ENCODE measurements at regions of chr22 and their contacts with region 1.

Region 1: GRCh38 chr22:25702040-25702439 is 39.9 kb upstream of the MYO18B start:
- DNase-seq: no peak
- H3K4me3 ChIP-seq: no peak overlapping the region
- CTCF ChIP-seq: peak; percentile 10

Region 2: GRCh38 chr22:25202290-25202921 is 499.6 kb before region 1 on chr22:
- CTCF ChIA-PET with region 1: interaction called, 12 read pairs
- POLR2A ChIA-PET with region 1: no interaction called
- DNase-seq: peak; percentile 2
- H3K4me3 ChIP-seq: no peak overlapping the region
- CTCF ChIP-seq: peak; percentile 85

Region 3: DNA sequence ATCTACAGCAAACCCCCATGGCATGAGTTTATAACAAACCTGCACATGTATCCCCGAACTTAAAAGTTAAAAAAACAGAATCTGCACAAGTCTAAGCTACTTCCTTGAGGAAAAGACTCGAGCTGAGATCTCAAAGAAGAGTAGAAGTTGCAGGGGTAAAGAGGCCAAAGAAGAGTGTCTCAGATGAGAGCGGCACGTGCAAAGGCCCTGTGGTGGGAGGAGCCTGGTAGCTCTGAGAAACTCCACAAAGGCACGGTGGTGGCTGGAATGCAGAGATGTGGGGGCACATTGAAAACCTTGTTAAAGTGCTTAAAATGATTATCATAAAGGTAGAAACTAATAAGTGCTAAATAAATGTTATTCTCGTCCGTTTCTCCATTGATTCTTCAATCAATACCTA is 240.7 kb before region 1 on chr22:
- CTCF ChIA-PET with region 1: interaction called, 32 read pairs
- POLR2A ChIA-PET with region 1: no interaction called
- DNase-seq: no peak
- H3K4me3 ChIP-seq: no peak overlapping the region
- CTCF ChIP-seq: no peak

Region 4: DNA sequence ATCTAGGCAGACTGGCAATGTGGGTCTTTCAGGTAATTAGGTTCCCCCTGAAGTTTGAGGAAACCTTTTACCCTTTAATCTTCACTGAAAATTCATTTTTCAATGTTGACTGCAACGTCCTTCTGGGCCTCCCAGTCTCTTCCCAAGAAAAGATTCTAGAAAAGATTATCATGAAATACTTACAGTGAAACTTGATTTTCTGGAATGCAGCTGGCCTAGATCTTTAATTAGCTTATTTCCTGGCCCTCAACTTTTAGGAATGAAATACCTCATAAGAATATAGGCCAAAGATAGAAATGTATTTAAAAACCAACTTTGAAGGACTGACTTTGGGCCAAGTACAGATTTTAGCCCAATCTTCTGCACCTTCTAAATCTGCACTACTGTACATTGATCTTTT is 16.7 kb before region 1 on chr22:
- CTCF ChIA-PET with region 1: no interaction called
- POLR2A ChIA-PET with region 1: no interaction called
- DNase-seq: no peak
- H3K4me3 ChIP-seq: no peak overlapping the region
- CTCF ChIP-seq: no peak